ENCODE measurements at regions of chr22 and their contacts with region 1.

Region 1: GRCh38 chr22:41966607-41967240 is 2.5 kb upstream of the SEPTIN3 start:
- DNase-seq: no peak
- ATAC-seq: peak; percentile 16 to 58 (median 40)
- H3K4me3 ChIP-seq: no peak overlapping the region
- H3K27ac ChIP-seq: no peak overlapping the region
- H3K4me1 ChIP-seq: no peaks in the 10 kb centered on the region
- H3K27me3 ChIP-seq: peaks cover 0 to 19% (median 8%) of the 10 kb centered on the region in 7 donors
- CTCF ChIP-seq: peak in 8 of 9 donors; percentile 22 to 56 (median 37)

Region 2: GRCh38 chr22:42114721-42115120 is 148.0 kb after region 1 on chr22:
- intact Hi-C with region 1: loop called in 5 of 10 experiments (anchors 5 to 10 kb)
- DNase-seq: no peak
- ATAC-seq: no peak
- H3K4me3 ChIP-seq: no peak overlapping the region
- H3K27ac ChIP-seq: no peak overlapping the region
- H3K4me1 ChIP-seq: no peaks in the 10 kb centered on the region
- H3K27me3 ChIP-seq: no peaks in the 10 kb centered on the region
- CTCF ChIP-seq: peak in 5 of 9 donors; percentile 20 to 41 (median 26)

Region 3: GRCh38 chr22:42444077-42444904 is 477.6 kb after region 1 on chr22:
- intact Hi-C with region 1: loop called in 9 of 10 experiments (anchors 5 to 10 kb)
- DNase-seq: peak; percentile 83 to 84
- ATAC-seq: peak; percentile 72 to 88 (median 83)
- H3K4me3 ChIP-seq: peak overlapping the region; percentile 14 to 53 (median 44)
- H3K27ac ChIP-seq: peak overlapping the region in 9 of 10 donors; percentile 57 to 85 (median 71)
- H3K4me1 ChIP-seq: peaks cover 3 to 39% (median 26%) of the 10 kb centered on the region in 9 donors
- H3K27me3 ChIP-seq: peaks cover 0 to 36% (median 9%) of the 10 kb centered on the region in 7 donors
- CTCF ChIP-seq: peak; percentile 24 to 68 (median 64)

Region 4: DNA sequence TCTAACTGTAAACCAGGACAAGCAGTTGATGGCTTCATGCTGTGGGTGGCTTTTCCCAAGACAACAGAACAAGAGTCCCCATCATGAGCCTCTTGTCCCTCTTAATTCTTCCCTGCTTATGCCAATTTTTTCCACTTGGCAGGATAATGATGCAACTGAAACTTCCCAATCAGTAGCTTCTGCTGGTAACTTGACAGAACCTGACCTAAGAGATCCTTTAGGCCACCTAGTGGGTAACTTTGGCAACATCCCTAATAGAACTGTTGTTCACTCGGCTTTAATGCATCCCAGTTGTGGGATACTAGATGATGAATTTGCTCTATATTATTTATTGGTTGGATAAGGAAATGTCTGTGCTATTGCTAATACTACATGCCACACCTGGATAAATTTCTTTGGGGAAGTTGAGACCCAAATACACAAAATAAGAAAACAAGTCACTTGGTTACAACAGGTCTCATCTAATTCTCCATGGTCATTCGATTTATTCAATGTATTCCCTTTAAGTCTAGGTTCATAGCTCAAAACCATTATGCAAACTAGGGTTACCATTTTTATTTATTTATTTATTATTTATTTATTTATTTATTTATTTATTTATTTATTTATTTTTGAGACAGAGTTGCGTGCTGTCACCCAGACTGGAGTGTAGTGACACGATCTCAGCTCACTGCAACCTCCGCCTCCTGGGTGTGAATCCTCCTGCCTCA is 506.9 kb after region 1 on chr22:
- intact Hi-C with region 1: loop called in 2 of 10 experiments (anchors 10 kb)
- DNase-seq: peak in 1 of 2 donors; percentile 12
- ATAC-seq: peak in 4 of 8 donors; percentile 23 to 62 (median 54)
- H3K4me3 ChIP-seq: no peak overlapping the region
- H3K27ac ChIP-seq: no peak overlapping the region
- H3K4me1 ChIP-seq: no peaks in the 10 kb centered on the region
- H3K27me3 ChIP-seq: no peaks in the 10 kb centered on the region
- CTCF ChIP-seq: peak; percentile 41 to 70 (median 64)

Region 5: GRCh38 chr22:42520663-42521546 is 554.2 kb after region 1 on chr22:
- intact Hi-C with region 1: no loop called
- DNase-seq: no peak
- ATAC-seq: peak in 1 of 8 donors; percentile 9
- H3K4me3 ChIP-seq: no peak overlapping the region
- H3K27ac ChIP-seq: no peak overlapping the region
- H3K4me1 ChIP-seq: peaks cover 0 to 24% (median 12%) of the 10 kb centered on the region in 9 donors
- H3K27me3 ChIP-seq: no peaks in the 10 kb centered on the region
- CTCF ChIP-seq: no peak